Activated naive CD4-positive, alpha-beta T cell treated with anti-CD3 and anti-CD28 coated beads for 36 hours (primary cell): ENCODE measurements at regions of chr2 and their contacts with region 1.

Region 1: DNA sequence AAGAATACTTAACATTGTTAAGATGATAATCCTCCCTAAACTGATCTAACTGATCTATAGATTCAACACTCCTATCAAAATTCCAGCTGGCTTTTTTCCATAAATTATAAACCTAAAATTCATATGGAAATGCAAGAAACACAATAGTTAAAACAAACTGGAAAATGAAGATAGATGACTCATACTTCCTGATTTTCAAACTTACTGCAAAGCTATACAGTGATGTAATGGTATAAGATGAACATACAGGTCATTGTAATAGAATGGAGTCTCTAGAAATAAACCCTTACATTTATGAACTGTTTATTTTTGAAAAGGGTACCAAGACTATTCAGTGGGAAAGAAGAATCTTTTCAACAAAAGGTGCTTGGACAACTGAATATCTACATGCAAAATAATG is 32.3 kb downstream of the UBXN4 start:
- DNase-seq: no peak
- H3K4me3 Mint-ChIP-seq: no peak overlapping the region
- H3K27ac Mint-ChIP-seq: peak overlapping the region; percentile 74
- H3K4me1 Mint-ChIP-seq: peaks cover 10% of the 10 kb centered on the region
- H3K27me3 Mint-ChIP-seq: no peaks in the 10 kb centered on the region

Region 2: GRCh38 chr2:134954065-134954464 is 819.9 kb before region 1 on chr2:
- CTCF ChIA-PET with region 1: no interaction called
- intact Hi-C with region 1: no loop called
- DNase-seq: no peak
- H3K4me3 Mint-ChIP-seq: no peak overlapping the region
- H3K27ac Mint-ChIP-seq: no peak overlapping the region
- H3K4me1 Mint-ChIP-seq: peaks cover 18% of the 10 kb centered on the region
- H3K27me3 Mint-ChIP-seq: no peaks in the 10 kb centered on the region

Region 3: DNA sequence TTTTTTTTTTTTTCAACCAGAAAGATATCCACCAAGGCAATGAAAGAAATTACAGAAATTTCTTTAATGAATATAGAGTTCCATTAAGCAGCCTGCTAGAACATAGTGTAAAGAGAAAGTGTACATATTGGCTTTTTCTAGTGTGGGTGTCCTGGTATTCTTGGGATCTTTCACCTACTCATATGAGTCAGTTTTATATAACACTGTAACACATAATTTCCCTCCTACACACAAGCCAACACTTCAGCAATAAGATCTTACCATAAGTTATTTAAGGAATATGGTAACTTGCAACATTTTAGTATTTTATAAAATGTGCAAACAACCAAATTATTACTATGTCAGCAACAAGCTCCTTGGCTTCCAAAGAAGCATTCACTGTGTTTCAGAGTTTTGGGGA is 302.8 kb before region 1 on chr2:
- CTCF ChIA-PET with region 1: no interaction called
- intact Hi-C with region 1: no loop called
- DNase-seq: no peak
- H3K4me3 Mint-ChIP-seq: no peak overlapping the region
- H3K27ac Mint-ChIP-seq: no peak overlapping the region
- H3K4me1 Mint-ChIP-seq: peaks cover 2% of the 10 kb centered on the region
- H3K27me3 Mint-ChIP-seq: no peaks in the 10 kb centered on the region

Region 4: GRCh38 chr2:135863233-135863632 is 89.3 kb after region 1 on chr2:
- CTCF ChIA-PET with region 1: no interaction called
- intact Hi-C with region 1: loop called (anchors 5 kb)
- DNase-seq: no peak
- H3K4me3 Mint-ChIP-seq: no peak overlapping the region
- H3K27ac Mint-ChIP-seq: no peak overlapping the region
- H3K4me1 Mint-ChIP-seq: peaks cover 14% of the 10 kb centered on the region
- H3K27me3 Mint-ChIP-seq: no peaks in the 10 kb centered on the region